A549 (cell line): ENCODE measurements at regions of chr7 and their contacts with region 1.

Region 1: GRCh38 chr7:98409843-98410242 is 9.0 kb upstream of the BAIAP2L1 start:
- DNase-seq: peak in 1 of 2 experiments; percentile 83
- ATAC-seq: peak; percentile 78 to 89
- H3K4me3 ChIP-seq: no peak overlapping the region
- H3K27ac ChIP-seq: peak overlapping the region; percentile 79 to 82
- H3K4me1 ChIP-seq: peaks cover 30% of the 10 kb centered on the region
- CTCF ChIP-seq: no peak
- EP300 ChIP-seq: peak in 1 of 2 experiments; percentile 47; a peak in 1 of 5 replicates
- POLR2A ChIP-seq: no peak
- RAD21 ChIP-seq: no peak

Region 2: DNA sequence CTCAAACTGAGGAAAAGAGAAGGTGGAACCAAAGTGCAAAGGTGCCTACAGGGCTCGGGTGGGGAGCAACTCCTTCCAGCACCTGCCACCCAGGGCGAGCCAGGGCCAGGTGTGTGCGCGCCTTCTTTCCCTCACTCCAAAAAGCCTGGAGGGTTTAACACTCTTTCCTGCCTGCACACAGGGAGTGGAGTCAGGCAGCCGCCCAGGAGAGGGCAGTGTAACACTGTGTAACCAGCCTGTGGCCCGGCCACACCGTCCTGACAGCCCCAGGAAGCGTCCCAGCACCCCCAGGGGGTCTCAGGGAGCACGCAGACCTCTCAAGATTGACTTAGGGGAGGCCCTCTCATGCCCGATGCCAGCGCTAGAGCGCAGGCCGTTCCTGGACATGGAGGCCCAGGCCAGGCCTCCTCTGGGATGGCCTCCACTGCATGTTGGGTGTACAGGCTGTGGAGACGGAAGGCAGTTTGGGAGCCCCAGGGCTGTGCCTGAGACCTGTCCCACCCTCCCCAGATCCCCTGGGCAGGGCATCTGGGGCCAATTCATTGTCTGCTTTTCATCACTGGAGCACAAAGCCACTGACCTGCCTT is 115.0 kb before region 1 on chr7:
- CTCF ChIA-PET with region 1: interaction called, 12 read pairs
- POLR2A ChIA-PET with region 1: no interaction called
- DNase-seq: peak; percentile 75 to 85
- ATAC-seq: peak; percentile 82 to 90
- H3K4me3 ChIP-seq: no peak overlapping the region
- H3K27ac ChIP-seq: peak overlapping the region; percentile 40 to 81
- H3K4me1 ChIP-seq: peaks cover 13% of the 10 kb centered on the region
- CTCF ChIP-seq: peak; percentile 90
- EP300 ChIP-seq: no peak
- POLR2A ChIP-seq: no peak
- RAD21 ChIP-seq: peak; percentile 93 to 96

Region 3: DNA sequence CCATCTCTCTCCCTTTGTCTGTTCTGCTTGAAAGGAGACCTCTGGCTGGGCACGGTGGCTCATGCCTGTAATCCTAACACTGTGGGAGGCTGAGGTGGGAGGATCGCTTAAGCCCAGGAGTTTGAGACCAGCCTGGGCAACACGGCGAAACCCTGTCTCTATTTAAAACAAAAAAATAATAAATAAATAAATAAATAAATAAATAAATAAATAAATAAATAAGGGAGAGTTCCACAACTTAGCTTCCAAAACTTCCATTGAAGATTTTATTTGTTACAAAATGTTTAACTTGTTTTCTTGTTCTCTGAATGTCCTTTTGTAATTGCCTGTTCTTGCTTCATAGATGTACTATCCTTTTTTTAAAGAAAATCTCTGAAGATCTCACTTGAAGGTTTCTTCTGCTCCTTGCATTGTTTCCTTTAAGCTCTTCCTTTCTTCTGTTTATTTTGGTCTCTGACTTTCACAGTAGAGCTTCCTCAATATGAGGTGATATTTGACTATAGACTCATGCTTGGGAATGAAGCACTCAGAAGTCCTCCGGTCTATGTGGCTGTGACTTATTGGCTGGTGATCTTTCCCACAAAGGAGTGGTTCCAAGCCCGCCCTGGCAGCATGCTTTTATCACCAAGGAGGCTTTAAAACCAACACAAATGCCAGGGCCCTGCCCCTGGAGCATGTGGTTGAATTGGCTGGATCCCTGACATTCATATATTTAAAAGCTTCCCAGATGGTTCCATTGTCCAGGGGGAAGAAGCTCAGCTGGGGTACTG is 189.2 kb after region 1 on chr7:
- CTCF ChIA-PET with region 1: no interaction called
- POLR2A ChIA-PET with region 1: no interaction called
- DNase-seq: no peak
- ATAC-seq: no peak
- H3K4me3 ChIP-seq: no peak overlapping the region
- H3K27ac ChIP-seq: no peak overlapping the region
- H3K4me1 ChIP-seq: no peaks in the 10 kb centered on the region
- CTCF ChIP-seq: no peak
- EP300 ChIP-seq: no peak
- POLR2A ChIP-seq: no peak
- RAD21 ChIP-seq: no peak